ENCODE measurements at regions of chr17 and their contacts with region 1.

Region 1: GRCh38 chr17:64950871-64951270 is 31.6 kb upstream of the LRRC37A3 start:
- DNase-seq: peak; percentile 31
- ATAC-seq: no peak
- H3K4me3 ChIP-seq: no peak overlapping the region
- H3K27ac ChIP-seq: no peak overlapping the region
- H3K4me1 ChIP-seq: no peaks in the 10 kb centered on the region
- H3K27me3 ChIP-seq: no peaks in the 10 kb centered on the region
- CTCF ChIP-seq: no peak
- POLR2A ChIP-seq: no peak
- RAD21 ChIP-seq: no peak

Region 2: GRCh38 chr17:64736804-64737492 is 213.9 kb before region 1 on chr17:
- CTCF ChIA-PET with region 1: no interaction called
- POLR2A ChIA-PET with region 1: no interaction called
- dilution Hi-C with region 1: no loop called
- in situ Hi-C with region 1: no loop called
- intact Hi-C with region 1: no loop called
- DNase-seq: peak; percentile 72
- ATAC-seq: peak; percentile 24
- H3K4me3 ChIP-seq: no peak overlapping the region
- H3K27ac ChIP-seq: no peak overlapping the region
- H3K4me1 ChIP-seq: peaks cover 32% of the 10 kb centered on the region
- H3K27me3 ChIP-seq: no peaks in the 10 kb centered on the region
- CTCF ChIP-seq: peak; percentile 64
- POLR2A ChIP-seq: no peak
- RAD21 ChIP-seq: peak; percentile 73

Region 3: DNA sequence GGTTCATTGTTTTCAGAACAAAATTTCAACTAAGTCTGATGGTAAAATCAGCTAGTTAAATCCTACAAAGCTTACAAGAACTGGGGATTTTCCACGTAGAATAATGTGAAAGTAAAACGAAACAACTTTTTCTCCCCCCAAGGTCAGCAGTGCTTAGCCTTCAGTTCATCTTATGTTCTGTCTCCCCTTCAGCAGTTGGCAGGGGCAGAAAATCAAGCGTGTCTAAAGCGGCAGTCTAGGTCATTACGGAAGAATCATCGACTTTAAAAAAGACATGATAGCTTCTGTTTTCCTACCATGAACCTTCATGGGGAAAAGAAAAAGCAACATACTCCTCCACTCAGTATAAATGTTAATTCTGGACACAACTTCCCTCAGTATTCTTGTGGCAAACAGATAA is 55.0 kb after region 1 on chr17:
- CTCF ChIA-PET with region 1: no interaction called
- POLR2A ChIA-PET with region 1: no interaction called
- dilution Hi-C with region 1: no loop called
- in situ Hi-C with region 1: no loop called
- intact Hi-C with region 1: no loop called
- DNase-seq: no peak
- ATAC-seq: no peak
- H3K4me3 ChIP-seq: no peak overlapping the region
- H3K27ac ChIP-seq: no peak overlapping the region
- H3K4me1 ChIP-seq: no peaks in the 10 kb centered on the region
- H3K27me3 ChIP-seq: no peaks in the 10 kb centered on the region
- CTCF ChIP-seq: no peak
- POLR2A ChIP-seq: no peak
- RAD21 ChIP-seq: no peak

Region 4: DNA sequence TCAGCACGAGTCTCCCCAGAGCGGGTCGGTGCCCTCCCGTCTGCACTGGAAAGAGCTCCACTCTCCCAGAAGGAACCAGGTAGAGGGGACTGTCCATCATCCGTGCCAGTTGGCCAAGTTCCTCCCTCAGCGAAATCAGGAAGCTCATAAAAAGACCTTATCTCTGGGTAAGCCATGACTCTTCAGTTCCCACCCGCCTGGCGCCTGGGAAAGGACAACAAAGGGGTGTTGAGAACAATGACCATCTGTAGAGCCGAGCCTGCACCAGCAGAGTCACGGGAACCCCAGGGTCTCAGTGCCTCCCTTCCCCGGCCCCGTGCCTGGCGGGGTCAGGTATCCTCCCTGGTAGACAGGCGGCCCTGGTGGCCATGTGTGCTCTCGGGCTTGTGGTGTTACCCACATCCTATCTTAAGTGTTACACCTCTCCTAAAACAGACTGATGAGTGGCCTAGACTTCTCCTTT is 419.8 kb after region 1 on chr17:
- CTCF ChIA-PET with region 1: no interaction called
- POLR2A ChIA-PET with region 1: interaction called, 13 read pairs
- dilution Hi-C with region 1: no loop called
- in situ Hi-C with region 1: no loop called
- intact Hi-C with region 1: no loop called
- DNase-seq: no peak
- ATAC-seq: no peak
- H3K4me3 ChIP-seq: no peak overlapping the region
- H3K27ac ChIP-seq: no peak overlapping the region
- H3K4me1 ChIP-seq: no peaks in the 10 kb centered on the region
- H3K27me3 ChIP-seq: peaks cover 38% of the 10 kb centered on the region
- CTCF ChIP-seq: no peak
- POLR2A ChIP-seq: no peak
- RAD21 ChIP-seq: no peak